GM10248 (cell line): ENCODE measurements at regions of chr1 and their contacts with region 1.

Region 1: GRCh38 chr1:12124693-12125421 is 41.9 kb upstream of the TNFRSF1B start:
- DNase-seq: peak; percentile 73
- CTCF ChIP-seq: peak; percentile 95

Region 2: DNA sequence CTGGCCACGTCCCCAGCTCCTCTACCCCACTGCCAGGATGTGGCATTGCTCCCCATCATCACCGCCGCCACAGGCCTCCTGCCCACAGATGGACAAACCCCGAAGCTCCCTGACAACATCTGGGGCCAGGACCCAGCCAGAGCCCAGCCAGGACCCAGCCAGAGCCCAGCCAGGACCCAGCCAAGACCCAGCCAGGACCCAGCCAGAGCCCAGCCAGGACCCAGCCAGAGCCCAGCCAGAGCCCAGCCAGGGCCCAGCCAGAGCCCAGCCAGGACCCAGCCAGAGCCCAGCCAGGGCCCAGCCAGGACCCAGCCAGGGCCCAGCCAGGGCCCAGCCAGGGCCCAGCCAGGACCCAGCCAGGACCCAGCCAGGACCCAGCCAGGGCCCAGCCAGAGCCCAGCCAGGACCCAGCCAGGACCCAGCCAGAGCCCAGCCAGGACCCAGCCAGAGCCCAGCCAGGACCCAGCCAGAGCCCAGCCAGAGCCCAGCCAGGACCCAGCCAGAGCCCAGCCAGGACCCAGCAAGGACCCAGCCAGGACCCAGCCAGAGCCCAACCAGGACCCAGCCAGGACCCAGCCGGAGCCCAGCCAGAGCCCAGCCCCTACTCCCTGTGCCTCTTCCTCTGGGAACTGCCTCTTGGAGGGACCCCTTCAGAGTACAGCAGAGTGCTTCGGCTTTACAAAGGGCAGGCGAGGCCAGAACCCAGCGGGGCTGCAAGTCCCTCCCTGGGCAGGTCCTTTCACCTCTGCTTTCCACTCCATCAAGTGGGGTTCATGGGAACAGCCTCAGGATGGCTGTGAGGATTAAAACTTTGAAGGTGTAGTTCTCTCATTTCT is 602.2 kb before region 1 on chr1:
- CTCF ChIA-PET with region 1: no interaction called
- POLR2A ChIA-PET with region 1: no interaction called
- DNase-seq: no peak
- CTCF ChIP-seq: no peak

Region 3: DNA sequence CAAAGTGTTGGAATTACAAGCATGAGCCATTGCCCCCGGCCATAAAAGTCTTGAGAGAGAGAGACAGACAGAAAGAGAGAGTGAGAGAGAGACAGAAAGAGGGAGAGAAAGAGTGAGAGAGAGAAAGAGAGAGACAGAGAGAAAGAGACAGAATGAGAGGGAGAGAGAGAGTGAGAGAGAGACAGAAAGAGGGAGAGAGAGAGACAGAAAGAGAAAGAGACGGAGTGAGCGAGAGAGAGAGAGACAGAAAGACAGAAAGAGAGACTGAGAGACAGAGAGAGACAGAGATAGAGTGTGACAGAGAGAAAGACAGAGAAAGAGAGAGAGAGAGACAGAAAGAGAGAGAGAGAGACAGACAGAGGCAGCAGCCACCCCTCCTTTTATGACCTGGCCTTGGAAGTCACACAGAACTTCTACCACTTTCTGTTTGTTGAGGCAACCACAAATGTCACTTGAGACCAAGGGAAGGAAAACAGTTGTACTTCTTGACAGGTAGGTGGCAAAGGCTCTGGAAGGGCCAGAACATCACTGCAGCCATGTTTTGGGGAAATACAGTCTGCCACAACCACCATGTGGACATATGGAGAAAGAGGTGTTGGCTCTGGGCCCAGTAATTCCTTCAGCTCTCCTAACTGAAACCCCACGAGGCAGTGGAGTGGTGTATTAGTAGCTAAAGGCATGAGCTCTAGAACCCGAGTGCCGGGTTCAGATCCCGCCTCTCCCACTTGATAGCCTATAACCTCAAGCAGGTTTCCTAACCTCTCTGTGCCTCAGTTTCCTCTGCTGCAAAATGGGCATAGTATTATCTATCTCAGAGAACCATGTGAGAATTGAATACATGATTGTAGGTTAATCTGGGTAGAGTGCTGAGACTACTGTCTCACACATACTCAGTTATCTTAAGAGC is 11.2 kb before region 1 on chr1:
- CTCF ChIA-PET with region 1: interaction called, 17 read pairs
- POLR2A ChIA-PET with region 1: no interaction called
- DNase-seq: no peak
- CTCF ChIP-seq: no peak

Region 4: DNA sequence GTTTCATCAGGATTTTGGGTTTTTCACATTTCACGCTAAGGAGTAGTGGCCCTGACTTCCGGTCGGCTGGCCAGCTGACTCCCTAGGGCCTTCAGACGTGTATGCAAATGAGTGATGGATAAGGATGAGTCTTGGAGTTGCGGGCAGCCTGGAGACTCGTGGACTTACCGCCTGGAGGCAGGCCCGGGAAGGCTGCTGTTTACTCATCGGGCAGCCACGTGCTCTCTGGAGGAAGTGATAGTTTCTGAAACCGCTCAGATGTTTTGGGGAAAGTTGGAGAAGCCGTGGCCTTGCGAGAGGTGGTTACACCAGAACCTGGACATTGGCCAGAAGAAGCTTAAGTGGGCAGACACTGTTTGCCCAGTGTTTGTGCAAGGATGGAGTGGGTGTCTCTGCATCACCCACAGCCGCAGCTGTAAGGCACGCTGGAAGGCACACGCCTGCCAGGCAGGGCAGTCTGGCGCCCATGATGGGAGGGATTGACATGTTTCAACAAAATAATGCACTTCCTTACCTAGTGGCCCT is 18.8 kb after region 1 on chr1:
- CTCF ChIA-PET with region 1: interaction called, 63 read pairs
- POLR2A ChIA-PET with region 1: interaction called, 3 read pairs
- DNase-seq: no peak
- CTCF ChIP-seq: no peak

Region 5: GRCh38 chr1:12161662-12162458 is 37.0 kb after region 1 on chr1:
- CTCF ChIA-PET with region 1: interaction called, 12 read pairs
- POLR2A ChIA-PET with region 1: no interaction called
- DNase-seq: peak; percentile 87
- CTCF ChIP-seq: no peak

Region 6: DNA sequence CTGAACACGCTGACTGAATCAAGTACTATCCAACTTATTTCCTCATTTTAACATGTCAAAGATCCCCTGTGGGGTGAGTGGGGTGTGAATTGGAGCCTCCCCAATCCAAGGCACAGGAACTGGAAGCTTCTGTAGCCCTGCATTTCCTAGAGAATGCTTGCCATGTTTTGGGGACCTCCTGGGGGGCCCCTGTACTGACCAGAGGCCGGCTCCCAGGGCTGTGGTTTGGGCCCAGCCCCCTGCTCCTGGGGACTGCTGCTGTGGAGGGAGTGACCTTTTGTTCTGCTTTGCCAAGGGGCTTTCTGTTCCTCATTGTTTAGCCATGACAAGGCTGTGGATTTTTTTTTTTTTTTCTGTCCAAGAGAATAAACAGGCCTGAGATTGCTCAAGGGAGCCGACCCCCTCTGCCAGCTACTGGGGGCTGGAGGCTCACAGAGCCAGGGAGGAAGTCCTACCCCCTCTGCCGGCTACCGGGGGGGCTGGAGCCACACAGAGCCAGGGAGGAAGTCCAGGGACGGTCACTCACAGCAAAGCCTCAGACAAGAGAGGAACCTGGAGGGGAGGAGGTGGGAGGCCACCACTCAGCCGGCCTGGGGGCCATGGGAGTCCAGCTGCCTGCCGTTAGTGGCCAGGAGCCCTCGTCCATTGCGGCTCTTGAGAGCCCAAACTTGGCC is 59.3 kb after region 1 on chr1:
- CTCF ChIA-PET with region 1: interaction called, 35 read pairs
- POLR2A ChIA-PET with region 1: no interaction called
- DNase-seq: peak; percentile 50
- CTCF ChIP-seq: no peak

Region 7: DNA sequence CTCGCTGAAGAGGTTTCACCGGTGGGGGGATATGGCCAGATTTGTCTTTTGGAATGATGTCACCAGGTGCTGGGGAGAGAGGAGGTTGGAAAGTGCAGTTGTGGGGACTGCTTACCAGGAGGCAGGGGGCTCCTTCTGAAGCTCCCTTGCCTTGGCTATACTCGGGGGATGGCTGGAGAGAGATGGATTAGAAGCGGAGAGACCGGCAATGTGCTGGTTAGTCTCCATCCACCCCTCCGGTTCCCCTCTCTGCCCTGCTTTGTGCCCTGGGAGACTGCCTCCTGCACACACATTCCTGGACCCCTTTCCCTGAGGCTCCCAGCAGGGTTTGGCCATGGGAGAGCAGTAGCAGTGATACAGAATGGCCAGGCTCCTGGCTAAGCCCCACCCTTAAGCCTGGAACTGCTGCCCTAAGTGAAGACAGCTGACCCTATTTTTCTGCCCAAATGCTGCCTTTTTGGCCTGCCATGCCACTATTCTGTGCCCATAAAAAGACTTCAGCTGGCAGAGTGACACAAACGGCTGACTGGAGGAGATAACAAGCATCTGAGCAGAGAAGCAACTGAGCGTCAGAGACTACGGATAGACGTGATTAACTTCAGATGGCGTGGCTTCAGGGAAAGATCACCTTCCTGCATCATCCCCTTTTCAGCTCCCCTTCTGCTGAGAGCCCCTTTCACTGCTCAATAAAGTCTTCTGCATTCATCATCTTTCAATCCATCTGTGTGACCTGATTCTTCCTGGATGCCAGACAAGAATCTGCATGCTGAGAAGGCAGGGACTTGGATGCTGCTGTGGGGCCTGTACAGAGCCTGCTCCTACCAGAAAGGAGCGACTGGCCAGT is 90.5 kb after region 1 on chr1:
- CTCF ChIA-PET with region 1: interaction called, 294 read pairs
- POLR2A ChIA-PET with region 1: no interaction called
- DNase-seq: no peak
- CTCF ChIP-seq: no peak

Region 8: DNA sequence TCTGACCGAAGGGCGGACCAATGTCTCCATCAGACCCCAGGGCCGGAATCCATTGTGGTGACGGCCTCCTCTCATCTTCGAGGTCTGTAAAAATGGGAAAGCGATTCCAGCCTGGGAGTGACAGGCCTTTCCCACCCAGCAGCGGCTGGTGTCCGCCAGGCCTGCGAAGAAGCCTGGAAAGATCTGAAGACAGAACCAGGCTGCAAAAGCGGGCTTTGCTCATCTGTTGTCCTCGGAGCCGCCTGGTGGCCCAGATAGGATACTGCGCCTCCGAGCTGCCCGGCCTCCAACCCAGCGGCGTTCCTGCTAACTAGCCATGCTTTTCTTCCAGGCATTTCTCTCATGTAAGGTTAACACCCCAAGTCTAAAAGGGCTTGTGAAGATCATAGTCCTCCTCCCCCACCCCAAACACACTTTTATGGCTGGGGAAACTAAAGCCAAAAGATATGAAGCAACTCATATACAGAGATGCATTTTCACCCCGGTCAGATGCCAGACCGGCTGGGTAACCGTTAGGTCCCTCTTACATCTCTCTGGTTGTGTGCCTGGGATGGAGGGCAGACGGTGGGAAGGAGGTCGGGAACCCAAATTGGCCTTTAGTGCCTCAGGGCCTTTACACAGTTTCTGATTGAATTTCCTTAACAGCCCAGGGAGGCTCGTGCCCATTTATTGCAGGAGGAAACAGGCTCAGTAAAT is 495.1 kb after region 1 on chr1:
- CTCF ChIA-PET with region 1: interaction called, 16 read pairs
- POLR2A ChIA-PET with region 1: no interaction called
- DNase-seq: peak; percentile 85
- CTCF ChIP-seq: peak; percentile 98